ENCODE measurements at regions of chr10 and their contacts with region 1.

Region 1: DNA sequence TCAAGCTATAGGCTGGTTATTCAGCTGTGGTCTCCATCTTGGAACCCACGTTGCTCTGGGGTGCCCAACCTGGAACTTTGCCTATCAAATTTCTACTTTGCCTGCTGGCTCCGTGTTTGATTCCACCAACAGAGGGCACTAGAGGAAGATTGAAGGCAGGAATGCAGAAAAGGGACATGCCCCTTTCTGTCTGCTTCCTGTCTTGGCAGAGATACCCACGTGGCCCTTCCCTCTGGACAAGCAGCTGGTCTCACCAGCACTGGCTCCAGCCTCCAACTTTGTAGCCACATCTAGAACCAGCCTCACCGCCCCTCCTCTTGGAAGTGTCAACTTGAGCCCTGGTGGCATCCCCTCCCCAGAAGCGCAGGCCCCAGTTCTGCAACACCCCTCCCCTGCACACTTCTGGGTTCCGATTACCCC is 52.1 kb upstream of the ZNF438 start:
- DNase-seq: peak; percentile 91
- H3K4me3 Mint-ChIP-seq: no peak overlapping the region
- H3K27ac Mint-ChIP-seq: peak overlapping the region; percentile 66
- H3K4me1 Mint-ChIP-seq: peaks cover 11% of the 10 kb centered on the region
- H3K27me3 Mint-ChIP-seq: no peaks in the 10 kb centered on the region

Region 2: GRCh38 chr10:31215052-31215451 is 131.3 kb after region 1 on chr10:
- intact Hi-C with region 1: loop called (anchors 10 kb)
- DNase-seq: peak; percentile 11
- H3K4me3 Mint-ChIP-seq: no peak overlapping the region
- H3K27ac Mint-ChIP-seq: no peak overlapping the region
- H3K4me1 Mint-ChIP-seq: no peaks in the 10 kb centered on the region
- H3K27me3 Mint-ChIP-seq: peaks cover 2% of the 10 kb centered on the region

Region 3: DNA sequence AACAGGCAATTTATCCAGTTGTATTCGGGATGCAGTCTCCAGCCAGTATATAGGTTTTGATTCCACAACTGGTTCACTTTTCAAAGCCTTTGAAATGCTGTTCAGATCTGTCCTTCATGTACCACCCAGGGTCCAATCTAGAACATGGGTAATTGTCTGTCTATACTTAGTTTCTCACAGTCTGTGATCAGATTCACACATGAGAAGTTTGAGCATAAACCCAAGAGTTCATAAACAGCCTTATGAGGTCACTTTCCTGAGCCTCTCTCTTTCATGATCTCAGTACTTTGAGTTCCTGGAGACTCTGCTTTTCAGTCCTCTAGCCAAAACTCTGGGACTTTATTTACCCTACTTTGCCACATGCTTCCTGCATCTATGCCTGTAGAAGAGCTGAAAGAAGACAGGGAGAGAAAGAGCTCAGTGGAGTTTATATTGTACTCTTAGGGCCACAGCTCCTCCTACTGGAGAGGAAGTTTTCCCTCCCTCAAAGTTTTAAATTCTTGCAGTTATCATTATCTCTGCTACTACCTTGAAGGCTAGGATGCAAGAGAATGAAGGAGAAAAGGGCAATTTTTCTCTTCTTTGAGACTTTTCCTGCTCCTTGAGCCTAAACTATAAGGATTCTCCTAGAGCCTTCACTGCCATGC is 407.2 kb after region 1 on chr10:
- intact Hi-C with region 1: loop called (anchors 1 kb)
- DNase-seq: peak; percentile 78
- H3K4me3 Mint-ChIP-seq: no peak overlapping the region
- H3K27ac Mint-ChIP-seq: peak overlapping the region; percentile 65
- H3K4me1 Mint-ChIP-seq: peaks cover 5% of the 10 kb centered on the region
- H3K27me3 Mint-ChIP-seq: no peaks in the 10 kb centered on the region